Heart right ventricle (tissue), 16 donors: ENCODE measurements at regions of chr2 and their contacts with region 1.

Region 1: DNA sequence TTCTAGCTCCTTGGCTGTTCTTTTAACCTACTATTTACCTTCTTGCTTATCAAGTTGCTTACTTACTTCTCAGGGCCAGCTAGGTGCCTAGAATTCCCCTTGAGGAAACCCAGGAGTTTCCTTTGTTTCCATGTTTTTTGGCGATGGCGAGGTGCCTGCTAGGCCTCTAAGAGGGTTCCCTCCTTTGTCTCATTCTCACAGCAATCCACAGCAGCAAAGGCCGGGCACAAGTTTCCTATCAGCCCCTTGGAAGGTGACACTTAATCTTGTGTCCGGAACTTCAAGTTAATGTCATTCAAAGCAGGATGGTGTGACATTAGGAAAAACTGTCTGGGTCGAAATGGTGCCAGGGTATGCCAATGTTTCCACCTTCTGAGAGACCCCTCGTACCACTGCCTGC is 101.9 kb upstream of the EPC2 start:
- DNase-seq: no peak
- ATAC-seq: no peak
- H3K4me3 ChIP-seq: no peak overlapping the region
- H3K27ac ChIP-seq: no peak overlapping the region
- H3K4me1 ChIP-seq: peaks cover 0 to 28% (median 0%) of the 10 kb centered on the region in 9 donors
- H3K27me3 ChIP-seq: no peaks in the 10 kb centered on the region
- CTCF ChIP-seq: no peak

Region 2: DNA sequence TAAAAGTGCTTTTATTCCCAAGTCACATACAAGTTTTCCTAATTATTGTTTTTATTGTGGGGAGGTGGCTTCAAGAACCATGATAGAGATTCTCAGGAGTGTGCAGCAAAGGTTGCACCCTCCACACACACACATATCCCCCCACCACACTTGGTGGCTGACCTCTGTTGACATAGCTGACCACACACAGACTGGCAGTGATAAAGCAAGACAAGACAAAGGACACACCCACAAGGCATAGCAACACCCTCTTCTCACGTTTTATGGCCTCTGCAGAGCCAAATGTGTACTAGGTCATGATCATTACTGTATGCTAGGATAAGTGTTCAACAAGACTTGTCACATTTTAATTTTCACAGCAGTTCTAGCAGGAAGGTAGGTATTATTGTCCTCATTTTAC is 41.1 kb before region 1 on chr2:
- intact Hi-C with region 1: no loop called
- DNase-seq: no peak
- ATAC-seq: no peak
- H3K4me3 ChIP-seq: no peak overlapping the region
- H3K27ac ChIP-seq: no peak overlapping the region
- H3K4me1 ChIP-seq: no peaks in the 10 kb centered on the region
- H3K27me3 ChIP-seq: no peaks in the 10 kb centered on the region
- CTCF ChIP-seq: no peak

Region 3: DNA sequence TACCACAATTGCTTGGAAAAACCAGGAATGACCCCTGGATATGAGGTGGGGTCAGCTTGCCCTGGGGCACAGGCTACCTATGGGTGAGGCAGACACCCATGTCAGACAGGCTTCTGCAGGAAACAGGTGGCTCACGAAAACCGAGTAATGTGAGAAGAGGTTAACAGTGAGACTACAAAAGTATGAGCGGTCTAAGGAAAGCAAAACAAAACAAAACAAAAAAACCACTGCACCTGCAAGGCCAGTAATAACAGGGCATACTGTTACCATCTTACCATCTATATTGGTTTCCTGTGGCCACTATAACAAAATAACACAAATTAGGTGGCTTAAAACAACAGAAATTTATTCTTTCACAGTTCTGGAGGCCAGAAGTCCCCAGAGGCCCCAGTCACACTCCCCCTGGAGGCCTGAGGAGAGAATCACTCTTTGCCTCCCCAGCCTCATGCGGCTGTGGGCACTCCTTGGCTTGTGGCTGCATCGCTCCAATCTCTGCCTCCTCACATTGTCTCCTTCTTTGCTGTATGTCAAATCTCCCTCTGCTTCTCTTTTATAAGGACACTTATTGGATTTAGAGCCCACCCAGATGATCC is 15.3 kb after region 1 on chr2:
- intact Hi-C with region 1: loop called in 1 of 10 experiments (anchors 1 kb)
- DNase-seq: no peak
- ATAC-seq: no peak
- H3K4me3 ChIP-seq: no peak overlapping the region
- H3K27ac ChIP-seq: no peak overlapping the region
- H3K4me1 ChIP-seq: peaks cover 0 to 9% (median 4%) of the 10 kb centered on the region in 9 donors
- H3K27me3 ChIP-seq: peaks cover 0 to 9% (median 0%) of the 10 kb centered on the region in 7 donors
- CTCF ChIP-seq: no peak